ENCODE measurements at regions of chr4 and their contacts with region 1.

Region 1: GRCh38 chr4:110106928-110107296 is 91.5 kb downstream of the ELOVL6 start:
- DNase-seq: peak; percentile 85
- ATAC-seq: peak; percentile 86
- H3K4me3 ChIP-seq: no peak overlapping the region
- H3K27ac ChIP-seq: no peak overlapping the region
- H3K4me1 ChIP-seq: peaks cover 3% of the 10 kb centered on the region
- H3K27me3 ChIP-seq: no peaks in the 10 kb centered on the region
- CTCF ChIP-seq: no peak
- POLR2A ChIP-seq: no peak
- RAD21 ChIP-seq: no peak

Region 2: GRCh38 chr4:109939190-109939589 is 167.7 kb before region 1 on chr4:
- CTCF ChIA-PET with region 1: no interaction called
- POLR2A ChIA-PET with region 1: no interaction called
- dilution Hi-C with region 1: no loop called
- in situ Hi-C with region 1: no loop called
- intact Hi-C with region 1: no loop called
- DNase-seq: no peak
- ATAC-seq: no peak
- H3K4me3 ChIP-seq: no peak overlapping the region
- H3K27ac ChIP-seq: no peak overlapping the region
- H3K4me1 ChIP-seq: no peaks in the 10 kb centered on the region
- H3K27me3 ChIP-seq: no peaks in the 10 kb centered on the region; the same call in 1 of the 2 replicates
- CTCF ChIP-seq: no peak
- POLR2A ChIP-seq: no peak
- RAD21 ChIP-seq: no peak

Region 3: GRCh38 chr4:110124711-110125110 is 17.8 kb after region 1 on chr4:
- CTCF ChIA-PET with region 1: no interaction called
- POLR2A ChIA-PET with region 1: no interaction called
- dilution Hi-C with region 1: no loop called
- in situ Hi-C with region 1: no loop called
- intact Hi-C with region 1: loop called (anchors 2 kb)
- DNase-seq: no peak
- ATAC-seq: no peak
- H3K4me3 ChIP-seq: no peak overlapping the region
- H3K27ac ChIP-seq: no peak overlapping the region
- H3K4me1 ChIP-seq: peaks cover 2% of the 10 kb centered on the region
- H3K27me3 ChIP-seq: no peaks in the 10 kb centered on the region
- CTCF ChIP-seq: no peak
- POLR2A ChIP-seq: no peak
- RAD21 ChIP-seq: no peak

Measured in IMR-90 (cell line).